A673 (cell line): ENCODE measurements at regions of chr18 and their contacts with region 1.

Region 1: DNA sequence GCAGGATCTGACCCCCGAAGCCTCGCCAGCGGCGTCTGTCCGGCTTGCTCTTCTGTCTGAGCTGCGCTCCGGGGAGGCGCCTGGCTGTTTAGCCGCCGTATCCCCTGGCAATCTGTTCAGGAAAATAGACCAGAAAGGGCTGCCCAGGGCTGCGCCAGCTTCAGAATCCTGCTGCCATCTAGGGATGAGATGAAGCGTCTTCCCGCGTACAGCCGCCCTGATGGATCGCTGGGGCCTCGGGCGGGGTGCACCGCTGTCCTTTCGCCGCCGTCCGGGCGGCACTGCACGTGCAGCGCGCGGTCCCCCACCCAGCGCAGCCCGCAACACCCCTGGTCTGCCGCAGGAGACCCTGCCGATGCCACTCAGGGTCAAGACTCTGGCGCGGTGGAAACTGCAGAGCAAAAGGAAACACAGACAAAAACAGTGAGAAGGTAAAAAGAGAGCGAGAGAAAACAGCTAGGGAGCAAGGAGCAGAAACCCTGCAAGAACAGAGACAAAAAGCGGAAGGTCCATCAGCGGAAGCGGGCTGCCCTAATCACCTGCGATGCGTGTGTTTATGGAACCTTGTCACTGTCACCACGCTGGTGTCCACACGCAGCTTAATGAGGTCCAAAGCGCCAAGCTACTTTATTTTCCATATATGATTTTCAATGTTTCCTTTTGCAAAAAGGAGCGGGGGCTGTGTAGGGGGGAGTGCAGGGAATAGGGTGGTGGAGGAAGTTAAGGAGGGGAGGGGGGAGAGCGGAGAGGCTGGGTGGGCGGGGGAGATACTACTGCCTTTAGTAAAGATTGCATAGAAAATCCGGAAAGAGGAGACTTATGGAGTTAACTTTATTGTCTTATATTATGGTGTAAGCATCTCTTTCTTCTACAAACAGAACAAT is 2113.3 kb upstream of the PIK3C3 start:
- DNase-seq: peak; percentile 87
- H3K4me3 ChIP-seq: peak overlapping the region; percentile 54
- H3K27ac ChIP-seq: no peak overlapping the region
- H3K4me1 ChIP-seq: peaks cover 36% of the 10 kb centered on the region
- H3K27me3 ChIP-seq: no peaks in the 10 kb centered on the region
- CTCF ChIP-seq: peak; percentile 75

Region 2: DNA sequence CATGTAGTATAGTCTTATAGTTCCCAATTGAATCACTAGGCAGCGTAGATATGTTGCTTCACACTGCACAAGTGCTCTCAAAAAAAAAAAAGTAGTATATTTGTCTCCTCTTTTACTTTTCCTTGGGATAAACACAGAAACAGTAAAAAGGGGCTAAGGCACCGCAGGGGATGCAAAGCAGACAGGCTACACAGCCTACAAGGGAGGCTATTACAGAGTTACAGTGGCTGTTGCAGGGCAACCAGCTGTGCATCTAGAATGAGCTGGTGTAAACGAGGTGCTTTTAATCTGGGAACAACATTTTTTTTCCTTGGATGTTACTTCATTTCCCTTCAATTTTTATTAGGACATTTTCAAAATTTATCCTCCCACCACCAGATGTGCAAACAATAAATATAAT is 341.4 kb before region 1 on chr18:
- CTCF ChIA-PET with region 1: interaction called, 11 read pairs
- POLR2A ChIA-PET with region 1: no interaction called
- intact Hi-C with region 1: no loop called
- DNase-seq: peak; percentile 9
- H3K4me3 ChIP-seq: no peak overlapping the region
- H3K27ac ChIP-seq: no peak overlapping the region
- H3K4me1 ChIP-seq: no peaks in the 10 kb centered on the region
- H3K27me3 ChIP-seq: no peaks in the 10 kb centered on the region
- CTCF ChIP-seq: no peak

Region 3: DNA sequence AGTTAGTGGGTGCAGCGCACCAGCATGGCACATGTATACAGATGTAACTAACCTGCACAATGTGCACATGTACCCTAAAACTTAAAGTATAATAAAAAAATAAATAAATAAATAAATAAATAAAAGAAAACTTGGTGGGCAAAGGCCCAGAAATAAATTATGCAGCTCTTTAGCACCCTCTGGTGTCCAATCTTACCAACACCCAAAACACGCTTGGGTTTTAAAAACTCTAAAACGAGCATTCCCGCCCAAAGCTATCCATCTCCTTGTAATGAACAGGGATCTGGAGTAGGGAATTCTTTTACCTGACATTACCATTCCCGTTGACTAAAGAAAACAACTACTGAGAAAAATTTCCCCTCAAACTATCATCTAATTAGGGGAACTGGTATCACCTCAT is 270.2 kb before region 1 on chr18:
- CTCF ChIA-PET with region 1: no interaction called
- POLR2A ChIA-PET with region 1: no interaction called
- intact Hi-C with region 1: loop called (anchors 10 kb)
- DNase-seq: peak; percentile 34
- H3K4me3 ChIP-seq: no peak overlapping the region
- H3K27ac ChIP-seq: no peak overlapping the region
- H3K4me1 ChIP-seq: peaks cover 9% of the 10 kb centered on the region
- H3K27me3 ChIP-seq: no peaks in the 10 kb centered on the region
- CTCF ChIP-seq: peak; percentile 46

Region 4: GRCh38 chr18:39647627-39648534 is 193.8 kb before region 1 on chr18:
- CTCF ChIA-PET with region 1: no interaction called
- POLR2A ChIA-PET with region 1: no interaction called
- intact Hi-C with region 1: loop called (anchors 10 kb)
- DNase-seq: peak; percentile 93
- H3K4me3 ChIP-seq: no peak overlapping the region
- H3K27ac ChIP-seq: peak overlapping the region; percentile 77
- H3K4me1 ChIP-seq: peaks cover 13% of the 10 kb centered on the region
- H3K27me3 ChIP-seq: no peaks in the 10 kb centered on the region
- CTCF ChIP-seq: no peak

Region 5: GRCh38 chr18:40159141-40160017 is 317.7 kb after region 1 on chr18:
- CTCF ChIA-PET with region 1: no interaction called
- POLR2A ChIA-PET with region 1: no interaction called
- intact Hi-C with region 1: loop called (anchors 10 kb)
- DNase-seq: peak; percentile 61
- H3K4me3 ChIP-seq: no peak overlapping the region
- H3K27ac ChIP-seq: no peak overlapping the region
- H3K4me1 ChIP-seq: no peaks in the 10 kb centered on the region
- H3K27me3 ChIP-seq: no peaks in the 10 kb centered on the region
- CTCF ChIP-seq: peak; percentile 75

Region 6: GRCh38 chr18:40179729-40180461 is 338.2 kb after region 1 on chr18:
- CTCF ChIA-PET with region 1: no interaction called
- POLR2A ChIA-PET with region 1: no interaction called
- intact Hi-C with region 1: no loop called
- DNase-seq: no peak
- H3K4me3 ChIP-seq: no peak overlapping the region
- H3K27ac ChIP-seq: no peak overlapping the region
- H3K4me1 ChIP-seq: no peaks in the 10 kb centered on the region
- H3K27me3 ChIP-seq: no peaks in the 10 kb centered on the region
- CTCF ChIP-seq: no peak